Dorsolateral prefrontal cortex (tissue), 120 donors: ENCODE measurements at regions of chr3 and their contacts with region 1.

Region 1: DNA sequence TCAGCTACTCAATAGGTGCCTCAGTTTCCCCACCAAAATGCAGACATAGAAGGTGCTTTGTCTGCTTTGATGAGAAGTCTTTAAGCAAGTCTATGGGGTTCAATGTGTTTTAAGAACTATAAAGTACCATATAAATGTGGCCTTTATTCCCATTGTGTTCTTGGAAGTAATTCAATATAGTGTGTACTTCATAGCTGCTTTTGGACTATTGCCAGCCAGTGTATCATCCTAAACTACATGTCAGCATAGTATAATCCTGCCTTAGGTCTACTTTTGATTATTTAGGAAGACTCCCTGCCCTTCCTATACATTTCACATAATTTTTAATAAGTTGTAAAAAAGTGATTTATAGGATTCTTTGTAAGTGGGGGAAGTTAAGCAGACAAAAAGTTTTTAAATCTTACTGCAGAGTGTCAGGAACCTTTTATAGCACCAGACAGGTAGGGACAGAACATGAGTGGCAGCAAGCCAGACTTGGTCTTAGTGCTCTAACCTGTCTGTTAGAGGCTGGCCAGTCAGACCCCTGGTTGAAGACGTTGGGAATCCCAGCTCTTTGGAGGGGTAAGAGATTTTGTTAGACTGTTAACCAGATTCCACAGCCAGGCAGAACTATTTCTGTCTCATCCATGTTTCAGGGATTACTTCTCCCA is 48.4 kb downstream of the MLH1 start:
- DNase-seq: no peak
- H3K4me3 ChIP-seq: no peak overlapping the region
- H3K27ac ChIP-seq: peak overlapping the region in 1 of 59 donors; percentile 30
- H3K27me3 ChIP-seq: no peaks in the 10 kb centered on the region
- CTCF ChIP-seq: no peak

Region 2: GRCh38 chr3:36494461-36495109 is 547.1 kb before region 1 on chr3:
- intact Hi-C with region 1: no loop called
- DNase-seq: no peak
- H3K4me3 ChIP-seq: no peak overlapping the region
- H3K27ac ChIP-seq: no peak overlapping the region
- H3K27me3 ChIP-seq: peaks cover 0 to 3% (median 0%) of the 10 kb centered on the region in 45 donors
- CTCF ChIP-seq: no peak

Region 3: DNA sequence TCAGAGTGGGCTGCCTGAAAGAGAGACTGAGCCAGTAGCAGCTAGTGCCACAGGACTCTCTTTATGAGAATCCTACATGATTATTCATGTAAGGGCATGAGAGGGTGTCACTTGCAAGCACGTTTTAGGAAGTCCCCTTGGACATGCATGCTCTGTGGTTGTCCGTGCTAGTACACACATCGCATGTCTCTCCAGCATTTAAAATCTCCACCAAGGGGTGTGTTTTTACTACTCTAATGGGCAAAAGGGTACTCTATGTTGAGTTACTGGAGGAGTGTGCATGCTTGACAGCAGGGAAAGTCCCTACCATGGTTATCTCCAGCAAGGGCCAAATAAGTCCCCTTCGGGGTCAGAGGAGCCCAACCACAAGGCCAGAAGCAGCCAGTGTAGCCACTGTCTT is 348.0 kb before region 1 on chr3:
- intact Hi-C with region 1: no loop called
- DNase-seq: no peak
- H3K4me3 ChIP-seq: no peak overlapping the region
- H3K27ac ChIP-seq: no peak overlapping the region
- H3K27me3 ChIP-seq: no peaks in the 10 kb centered on the region
- CTCF ChIP-seq: no peak

Region 4: GRCh38 chr3:37024092-37024491 is 17.6 kb before region 1 on chr3:
- intact Hi-C with region 1: no loop called
- DNase-seq: no peak
- H3K4me3 ChIP-seq: no peak overlapping the region
- H3K27ac ChIP-seq: peak overlapping the region in 3 of 59 donors; percentile 4 to 33 (median 27)
- H3K27me3 ChIP-seq: no peaks in the 10 kb centered on the region
- CTCF ChIP-seq: peak in 46 of 56 donors; percentile 15 to 56 (median 36)

Region 5: DNA sequence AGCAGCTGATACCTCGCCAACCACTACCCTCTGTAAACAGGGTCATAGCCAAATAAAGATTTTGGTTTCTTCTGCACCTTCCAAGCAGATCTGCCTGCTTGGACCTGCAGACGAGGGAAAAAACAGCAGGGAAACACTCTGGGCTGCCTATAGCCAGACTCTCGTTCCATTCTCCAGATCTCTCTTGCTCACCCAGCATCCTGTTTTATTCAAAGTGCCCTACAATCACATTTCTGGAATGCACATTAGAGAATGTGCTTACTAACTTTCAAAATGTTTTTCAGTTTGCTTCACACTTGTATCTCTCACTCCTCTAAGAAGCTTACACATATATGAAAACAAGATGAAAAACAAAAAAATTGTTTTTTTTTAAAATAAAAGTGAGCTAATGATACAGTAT is 23.1 kb after region 1 on chr3:
- intact Hi-C with region 1: no loop called
- DNase-seq: no peak
- H3K4me3 ChIP-seq: no peak overlapping the region
- H3K27ac ChIP-seq: no peak overlapping the region
- H3K27me3 ChIP-seq: no peaks in the 10 kb centered on the region
- CTCF ChIP-seq: no peak

Region 6: GRCh38 chr3:37210230-37210629 is 168.6 kb after region 1 on chr3:
- intact Hi-C with region 1: loop called in 1 of 2 experiments (anchors 10 kb)
- DNase-seq: peak in 1 of 10 donors; percentile 14
- H3K4me3 ChIP-seq: no peak overlapping the region
- H3K27ac ChIP-seq: peak overlapping the region in 1 of 59 donors; percentile 19
- H3K27me3 ChIP-seq: no peaks in the 10 kb centered on the region
- CTCF ChIP-seq: no peak